ENCODE measurements at regions of chr1 and their contacts with region 1.

Region 1: GRCh38 chr1:22431965-22432364 is 19.7 kb upstream of the ZBTB40 start:
- DNase-seq: no peak
- ATAC-seq: no peak
- H3K4me3 ChIP-seq: no peak overlapping the region
- H3K4me3 Mint-ChIP-seq: no peak overlapping the region
- H3K27ac ChIP-seq: no peak overlapping the region
- H3K27ac Mint-ChIP-seq: no peak overlapping the region
- H3K4me1 ChIP-seq: no peaks in the 10 kb centered on the region
- H3K4me1 Mint-ChIP-seq: no peaks in the 10 kb centered on the region
- H3K27me3 ChIP-seq: no peaks in the 10 kb centered on the region
- H3K27me3 Mint-ChIP-seq: peaks cover 30% of the 10 kb centered on the region
- CTCF ChIP-seq: no peak

Region 2: GRCh38 chr1:21573971-21574465 is 857.9 kb before region 1 on chr1:
- CTCF ChIA-PET with region 1: no interaction called
- POLR2A ChIA-PET with region 1: no interaction called
- intact Hi-C with region 1: no loop called
- DNase-seq: peak in 2 of 14 experiments; percentile 14 to 22
- ATAC-seq: no peak
- H3K4me3 ChIP-seq: no peak overlapping the region
- H3K4me3 Mint-ChIP-seq: no peak overlapping the region
- H3K27ac ChIP-seq: no peak overlapping the region
- H3K27ac Mint-ChIP-seq: no peak overlapping the region
- H3K4me1 ChIP-seq: no peaks in the 10 kb centered on the region
- H3K4me1 Mint-ChIP-seq: no peaks in the 10 kb centered on the region
- H3K27me3 ChIP-seq: peaks cover 9 to 10% of the 10 kb centered on the region in 2 experiments
- H3K27me3 Mint-ChIP-seq: peaks cover 20% of the 10 kb centered on the region
- CTCF ChIP-seq: no peak

Region 3: GRCh38 chr1:22018583-22019559 is 413.1 kb before region 1 on chr1:
- CTCF ChIA-PET with region 1: no interaction called
- POLR2A ChIA-PET with region 1: no interaction called
- intact Hi-C with region 1: no loop called
- DNase-seq: peak; percentile 41 to 91 (median 58)
- ATAC-seq: peak; percentile 95
- H3K4me3 ChIP-seq: no peak overlapping the region
- H3K4me3 Mint-ChIP-seq: peak overlapping the region; percentile 57
- H3K27ac ChIP-seq: peak overlapping the region in 1 of 2 donors; percentile 65
- H3K27ac Mint-ChIP-seq: peak overlapping the region; percentile 89
- H3K4me1 ChIP-seq: peaks cover 43% of the 10 kb centered on the region
- H3K4me1 Mint-ChIP-seq: peaks cover 25% of the 10 kb centered on the region
- H3K27me3 ChIP-seq: no peaks in the 10 kb centered on the region
- H3K27me3 Mint-ChIP-seq: no peaks in the 10 kb centered on the region
- CTCF ChIP-seq: peak; percentile 35

Region 4: GRCh38 chr1:22414244-22414751 is 17.7 kb before region 1 on chr1:
- CTCF ChIA-PET with region 1: no interaction called
- POLR2A ChIA-PET with region 1: no interaction called
- intact Hi-C with region 1: no loop called
- DNase-seq: no peak
- ATAC-seq: no peak
- H3K4me3 ChIP-seq: no peak overlapping the region
- H3K4me3 Mint-ChIP-seq: no peak overlapping the region
- H3K27ac ChIP-seq: no peak overlapping the region
- H3K27ac Mint-ChIP-seq: no peak overlapping the region
- H3K4me1 ChIP-seq: peaks cover 7% of the 10 kb centered on the region
- H3K4me1 Mint-ChIP-seq: peaks cover 4% of the 10 kb centered on the region
- H3K27me3 ChIP-seq: peaks cover 7 to 19% of the 10 kb centered on the region in 2 experiments
- H3K27me3 Mint-ChIP-seq: peaks cover 43% of the 10 kb centered on the region
- CTCF ChIP-seq: no peak

Region 5: GRCh38 chr1:22451702-22452474 is 19.9 kb after region 1 on chr1 and contains the start of gene ZBTB40:
- CTCF ChIA-PET with region 1: no interaction called
- POLR2A ChIA-PET with region 1: no interaction called
- intact Hi-C with region 1: loop called in 1 of 2 experiments (anchors 2 kb)
- DNase-seq: peak; percentile 88 to 98 (median 92)
- ATAC-seq: peak; percentile 90
- H3K4me3 ChIP-seq: peak within 1 kb of the TSS; percentile 94
- H3K4me3 Mint-ChIP-seq: peak within 1 kb of the TSS; percentile 91
- H3K27ac ChIP-seq: peak within 1 kb of the TSS; percentile 88 to 89
- H3K27ac Mint-ChIP-seq: peak within 1 kb of the TSS; percentile 85
- H3K4me1 ChIP-seq: peaks cover 11% of the 10 kb centered on the region
- H3K4me1 Mint-ChIP-seq: peaks cover 45% of the 10 kb centered on the region
- H3K27me3 ChIP-seq: no peaks in the 10 kb centered on the region
- H3K27me3 Mint-ChIP-seq: no peaks in the 10 kb centered on the region
- CTCF ChIP-seq: no peak
- total RNA-seq, gene ZBTB40: 28.4 to 30.6 TPM

Region 6: GRCh38 chr1:22518379-22518778 is 86.4 kb after region 1 on chr1:
- CTCF ChIA-PET with region 1: no interaction called
- POLR2A ChIA-PET with region 1: no interaction called
- intact Hi-C with region 1: no loop called
- DNase-seq: no peak
- ATAC-seq: no peak
- H3K4me3 ChIP-seq: no peak overlapping the region
- H3K4me3 Mint-ChIP-seq: no peak overlapping the region
- H3K27ac ChIP-seq: no peak overlapping the region
- H3K27ac Mint-ChIP-seq: no peak overlapping the region
- H3K4me1 ChIP-seq: no peaks in the 10 kb centered on the region
- H3K4me1 Mint-ChIP-seq: no peaks in the 10 kb centered on the region
- H3K27me3 ChIP-seq: no peaks in the 10 kb centered on the region
- H3K27me3 Mint-ChIP-seq: no peaks in the 10 kb centered on the region
- CTCF ChIP-seq: no peak

Measured in CD4-positive, alpha-beta T cell (primary cell).